HCT116 (cell line): ENCODE measurements at regions of chr6 and their contacts with region 1.

Region 1: GRCh38 chr6:40845553-40845952 is 193.5 kb downstream of the UNC5CL start:
- DNase-seq: peak; percentile 31
- ATAC-seq: peak; percentile 95
- H3K4me3 ChIP-seq: no peak overlapping the region
- H3K27ac ChIP-seq: no peak overlapping the region
- H3K4me1 ChIP-seq: no peaks in the 10 kb centered on the region
- H3K27me3 ChIP-seq: peaks cover 46% of the 10 kb centered on the region
- CTCF ChIP-seq: peak; percentile 41 to 79 (median 67); a peak in 5 of 6 replicates
- POLR2A ChIP-seq: no peak
- RAD21 ChIP-seq: peak; percentile 62

Region 2: DNA sequence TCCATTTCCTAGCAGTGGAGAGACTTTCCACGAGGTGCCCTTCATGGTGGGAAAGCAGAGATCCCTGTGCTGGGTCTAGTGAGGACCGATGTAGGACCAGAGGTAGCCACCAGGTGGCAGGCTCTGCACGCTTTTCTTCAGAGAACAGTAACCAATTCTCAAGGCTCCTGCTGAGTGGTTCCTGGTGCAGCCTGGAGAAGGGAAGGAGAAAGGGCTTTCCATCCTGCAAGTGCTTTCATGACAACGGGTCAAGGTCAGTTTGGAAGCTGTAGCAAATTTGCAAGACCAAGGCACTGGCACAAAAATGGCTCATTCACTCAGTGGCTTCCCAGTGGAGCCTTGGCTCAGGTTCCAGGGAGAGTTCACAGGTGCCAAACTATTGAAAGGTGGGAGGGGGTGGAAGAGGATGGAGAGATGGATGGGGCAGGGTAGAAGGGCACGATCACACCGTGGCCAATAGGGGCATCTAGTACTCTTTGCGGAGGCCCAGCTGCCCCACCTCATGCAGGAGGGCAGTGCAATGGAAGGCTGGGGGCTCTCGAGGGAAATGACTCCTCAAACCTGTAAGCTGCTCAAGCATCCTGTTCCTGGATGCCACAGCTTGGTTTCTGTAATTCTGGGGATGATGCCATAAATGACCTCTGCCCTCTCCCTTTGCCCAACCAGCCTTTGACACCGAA is 1497.5 kb before region 1 on chr6:
- CTCF ChIA-PET with region 1: no interaction called
- POLR2A ChIA-PET with region 1: no interaction called
- RAD21 ChIA-PET with region 1: no interaction called
- intact Hi-C with region 1: loop called (anchors 10 kb)
- DNase-seq: peak; percentile 24
- ATAC-seq: peak; percentile 92
- H3K4me3 ChIP-seq: no peak overlapping the region
- H3K27ac ChIP-seq: no peak overlapping the region
- H3K4me1 ChIP-seq: no peaks in the 10 kb centered on the region
- H3K27me3 ChIP-seq: no peaks in the 10 kb centered on the region; the same call in 1 of the 2 replicates
- CTCF ChIP-seq: peak; percentile 51 to 87 (median 85); a peak in 5 of 6 replicates
- POLR2A ChIP-seq: no peak
- RAD21 ChIP-seq: peak; percentile 79

Region 3: DNA sequence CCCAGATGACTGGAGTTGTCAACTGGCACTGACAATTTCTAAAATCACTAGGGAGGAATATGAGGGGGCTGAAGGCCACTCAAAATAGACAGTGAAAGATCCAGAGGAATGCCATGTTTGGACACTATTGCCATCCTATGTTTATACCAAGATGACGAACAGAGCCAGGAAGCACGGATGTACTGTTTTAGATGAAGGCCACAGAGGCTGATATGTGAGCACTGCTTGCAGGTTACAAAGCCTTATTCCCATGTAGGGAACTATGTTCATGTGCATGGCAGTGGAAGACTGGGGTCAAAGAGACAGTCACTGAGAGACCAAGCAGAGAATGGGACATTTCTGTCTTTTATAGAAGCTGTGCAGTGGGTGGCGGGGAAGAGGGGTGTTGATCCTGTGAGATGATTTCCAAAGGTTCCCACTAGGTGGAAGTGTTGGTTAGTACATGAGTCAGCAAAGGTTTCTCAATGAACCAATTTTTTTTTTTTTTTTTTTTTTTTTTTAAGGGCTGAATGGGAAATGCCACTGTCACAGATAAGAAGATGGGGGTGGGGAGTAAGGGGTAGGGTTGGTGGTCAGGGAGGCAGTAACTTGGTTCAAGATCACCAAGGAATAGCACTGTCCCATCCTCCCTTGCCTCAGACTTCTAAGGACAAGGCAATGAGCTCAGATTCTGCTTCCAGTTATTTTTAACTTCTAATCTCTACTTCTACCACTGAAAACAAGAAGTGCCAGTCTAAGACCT is 864.5 kb before region 1 on chr6:
- CTCF ChIA-PET with region 1: no interaction called
- POLR2A ChIA-PET with region 1: no interaction called
- RAD21 ChIA-PET with region 1: no interaction called
- intact Hi-C with region 1: loop called (anchors 5 kb)
- DNase-seq: peak; percentile 37
- ATAC-seq: peak; percentile 84
- H3K4me3 ChIP-seq: no peak overlapping the region
- H3K27ac ChIP-seq: no peak overlapping the region
- H3K4me1 ChIP-seq: no peaks in the 10 kb centered on the region
- H3K27me3 ChIP-seq: no peaks in the 10 kb centered on the region; the same call in 1 of the 2 replicates
- CTCF ChIP-seq: peak; percentile 40 to 55 (median 54); a peak in 5 of 6 replicates
- POLR2A ChIP-seq: no peak
- RAD21 ChIP-seq: peak; percentile 66

Region 4: DNA sequence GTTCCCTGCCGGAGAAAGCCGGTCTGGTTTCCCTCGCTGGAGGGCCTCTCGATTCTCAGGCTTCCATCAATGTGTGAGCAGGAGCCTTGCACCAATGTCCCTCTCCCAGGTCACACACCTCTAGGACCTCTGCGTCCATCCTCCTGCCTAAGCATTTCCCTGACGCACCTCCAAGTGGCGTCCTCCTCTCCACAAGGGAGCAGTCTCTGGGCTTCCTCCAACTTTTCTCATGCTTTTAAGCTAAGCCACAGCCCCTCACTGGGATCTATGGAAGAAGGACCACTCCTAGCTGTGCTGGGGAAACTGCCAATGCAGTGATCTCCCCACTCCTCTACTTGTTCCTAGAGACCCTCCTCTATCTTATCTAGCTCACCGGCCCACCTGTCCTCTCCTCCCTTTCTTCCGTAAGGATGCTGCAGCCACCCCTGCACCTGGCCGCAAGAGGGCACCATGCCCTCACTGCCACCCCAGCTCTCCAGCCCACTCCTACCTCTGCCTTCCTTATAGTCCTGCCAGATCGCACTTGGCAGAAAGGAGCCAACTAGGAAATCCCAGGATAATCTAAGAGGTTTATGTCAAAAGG is 517.1 kb before region 1 on chr6:
- CTCF ChIA-PET with region 1: interaction called, 20 read pairs
- POLR2A ChIA-PET with region 1: no interaction called
- RAD21 ChIA-PET with region 1: interaction called in 1 of 2 experiments, 3 read pairs
- intact Hi-C with region 1: loop called (anchors 1 kb)
- DNase-seq: peak; percentile 33
- ATAC-seq: peak; percentile 97
- H3K4me3 ChIP-seq: no peak overlapping the region
- H3K27ac ChIP-seq: no peak overlapping the region
- H3K4me1 ChIP-seq: no peaks in the 10 kb centered on the region; a peak in 1 of 4 replicates
- H3K27me3 ChIP-seq: peaks cover 69% of the 10 kb centered on the region
- CTCF ChIP-seq: peak; percentile 94 to 98 (median 96)
- POLR2A ChIP-seq: no peak
- RAD21 ChIP-seq: peak; percentile 88

Region 5: DNA sequence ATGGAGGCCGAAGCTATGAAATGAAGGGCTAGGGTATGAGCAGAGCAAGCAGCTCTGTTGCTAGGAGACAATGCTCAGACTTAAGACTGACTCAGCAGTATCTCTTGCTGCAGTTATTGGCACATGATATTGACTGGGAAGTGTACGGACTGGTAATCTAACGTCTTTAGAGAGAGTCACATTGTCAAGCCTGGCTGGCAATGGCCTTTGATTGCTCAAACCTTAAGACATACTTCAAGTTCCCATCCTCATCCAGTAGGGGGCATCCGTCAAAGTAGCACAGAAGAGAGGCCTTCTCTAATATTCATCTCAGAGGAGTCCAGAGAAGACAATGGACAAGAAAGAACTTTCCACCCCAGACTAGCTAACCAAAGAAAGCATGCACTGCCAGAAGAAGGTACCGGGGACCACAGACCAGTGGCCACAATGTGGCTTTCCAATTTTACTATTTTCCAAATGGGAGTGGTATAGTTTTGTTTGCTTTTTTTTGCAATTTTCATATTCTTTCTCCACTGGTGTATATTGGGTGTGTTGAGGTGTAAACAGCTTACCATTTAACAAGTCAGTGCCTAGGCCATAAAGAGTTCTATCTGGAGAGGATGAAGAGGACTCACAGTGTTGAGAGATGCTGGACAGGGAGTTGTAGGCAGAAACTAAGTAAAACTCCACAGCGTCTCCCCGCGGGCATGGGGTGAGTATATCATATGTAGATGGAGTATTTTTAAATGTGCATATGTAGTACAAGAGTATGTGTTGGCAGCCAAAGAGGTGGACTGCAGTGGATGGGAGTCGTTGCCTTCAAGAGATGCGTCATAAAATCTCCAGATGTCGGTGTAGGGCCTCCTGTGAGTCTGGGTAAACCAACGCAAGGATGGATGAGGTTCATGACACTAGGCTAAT is 295.1 kb before region 1 on chr6:
- CTCF ChIA-PET with region 1: no interaction called
- POLR2A ChIA-PET with region 1: no interaction called
- RAD21 ChIA-PET with region 1: no interaction called
- intact Hi-C with region 1: loop called (anchors 10 kb)
- DNase-seq: peak; percentile 44
- ATAC-seq: peak; percentile 90
- H3K4me3 ChIP-seq: no peak overlapping the region
- H3K27ac ChIP-seq: no peak overlapping the region
- H3K4me1 ChIP-seq: no peaks in the 10 kb centered on the region
- H3K27me3 ChIP-seq: peaks cover 5% of the 10 kb centered on the region; the same call in 1 of the 2 replicates
- CTCF ChIP-seq: peak; percentile 43 to 78 (median 71)
- POLR2A ChIP-seq: no peak
- RAD21 ChIP-seq: peak; percentile 50